B cell (primary cell): ENCODE measurements at regions of chr1 and their contacts with region 1.

Region 1: DNA sequence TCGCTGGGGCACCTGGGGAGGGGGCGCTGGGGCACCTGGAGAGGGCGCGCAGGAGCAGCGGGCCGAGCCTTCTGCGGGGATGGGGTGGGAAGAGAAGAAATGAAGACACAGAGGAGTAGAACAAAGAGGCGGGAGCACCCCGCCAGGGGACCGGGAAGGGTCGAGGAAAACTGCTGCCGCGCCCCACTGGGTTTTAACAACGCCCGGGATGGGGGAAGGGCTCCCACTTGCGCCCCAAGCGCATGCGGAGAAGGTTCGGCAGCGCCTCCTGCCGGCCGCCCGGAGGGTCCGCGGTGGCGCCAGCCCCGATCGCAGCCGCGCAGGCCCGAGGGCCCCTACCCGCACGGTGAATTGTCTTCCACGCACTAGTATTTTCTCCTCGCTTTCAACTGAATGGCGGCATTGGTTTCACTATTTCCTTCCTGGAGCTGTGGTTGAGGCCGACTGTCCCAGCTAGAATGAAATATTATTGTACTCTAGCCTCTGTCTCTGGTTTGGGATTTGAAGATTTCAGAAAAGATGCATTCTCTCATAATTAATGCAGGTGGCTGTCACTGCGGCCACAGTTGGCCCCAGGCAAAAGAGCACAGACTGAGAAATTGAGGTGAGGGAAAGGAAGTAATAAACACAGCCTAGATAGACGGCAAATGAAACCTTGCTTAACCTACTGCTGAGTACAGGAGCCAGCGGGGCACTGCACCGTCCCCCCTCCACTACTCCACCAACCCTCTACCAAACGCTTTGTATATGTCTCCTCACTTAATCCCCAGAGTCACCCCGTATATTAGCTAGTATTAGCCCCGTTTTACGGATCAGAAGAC is 57.3 kb downstream of the MAB21L3 start:
- DNase-seq: peak; percentile 83
- ATAC-seq: peak; percentile 94
- H3K4me3 ChIP-seq: peak overlapping the region; percentile 21 to 62 (median 54)
- H3K4me3 Mint-ChIP-seq: peak overlapping the region; percentile 85
- H3K27ac ChIP-seq: peak overlapping the region in 1 of 2 donors; percentile 4
- H3K27ac Mint-ChIP-seq: peak overlapping the region; percentile 66
- H3K4me1 ChIP-seq: peaks cover 15 to 16% of the 10 kb centered on the region in 2 donors
- H3K4me1 Mint-ChIP-seq: peaks cover 16% of the 10 kb centered on the region
- H3K27me3 ChIP-seq: peaks cover 0 to 19% (median 3%) of the 10 kb centered on the region in 4 experiments
- H3K27me3 Mint-ChIP-seq: peaks cover 24% of the 10 kb centered on the region
- CTCF ChIP-seq: peak; percentile 96

Region 2: DNA sequence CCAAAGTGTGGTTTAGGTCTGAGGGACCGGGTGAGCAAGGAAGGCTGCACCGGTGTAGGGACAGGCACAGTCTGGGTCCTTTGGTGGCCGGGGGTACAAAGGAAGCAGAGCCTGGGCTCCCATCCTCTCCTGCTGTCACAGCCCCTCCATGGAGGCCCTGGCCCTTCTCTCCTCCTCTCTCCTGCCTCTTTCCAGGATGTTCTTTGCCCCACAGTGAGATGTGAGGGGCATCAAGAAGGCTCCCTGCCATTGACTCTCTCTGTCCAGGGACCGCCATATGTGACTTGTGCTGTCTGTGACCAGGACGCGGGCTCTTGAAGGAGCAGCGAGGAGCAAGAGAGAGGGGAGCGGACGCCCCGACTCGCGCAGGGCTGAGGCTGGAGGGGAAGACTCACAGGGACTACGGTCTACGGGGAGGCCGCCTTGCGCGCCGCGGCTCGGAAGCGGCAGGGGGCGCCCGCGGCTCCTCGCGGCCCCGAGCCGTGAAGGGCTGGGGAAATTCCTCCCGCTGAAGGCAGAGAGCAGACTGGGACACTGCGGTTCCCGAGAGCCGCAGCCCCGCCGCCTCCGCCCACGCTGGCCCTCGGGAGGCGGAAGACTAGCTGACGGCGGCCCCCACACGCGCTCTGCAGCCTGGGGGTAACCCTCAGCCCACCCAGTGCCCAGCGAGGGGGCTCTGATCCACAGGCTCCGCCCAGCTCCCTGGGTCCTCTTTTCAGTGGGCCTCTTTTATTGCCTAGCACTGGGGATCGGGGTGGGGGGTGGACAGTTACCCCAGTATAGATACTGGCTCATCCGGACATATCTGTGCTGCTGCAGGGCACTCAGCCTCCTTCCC is 16.5 kb before region 1 on chr1:
- CTCF ChIA-PET with region 1: interaction called, 7 read pairs
- POLR2A ChIA-PET with region 1: no interaction called
- intact Hi-C with region 1: loop called (anchors 2 kb)
- DNase-seq: peak; percentile 86
- ATAC-seq: peak; percentile 98
- H3K4me3 ChIP-seq: peak overlapping the region in 4 of 5 experiments; percentile 17 to 44 (median 41)
- H3K4me3 Mint-ChIP-seq: peak overlapping the region; percentile 65
- H3K27ac ChIP-seq: no peak overlapping the region
- H3K27ac Mint-ChIP-seq: no peak overlapping the region
- H3K4me1 ChIP-seq: peaks cover 7 to 11% of the 10 kb centered on the region in 2 donors
- H3K4me1 Mint-ChIP-seq: peaks cover 8% of the 10 kb centered on the region
- H3K27me3 ChIP-seq: no peaks in the 10 kb centered on the region
- H3K27me3 Mint-ChIP-seq: peaks cover 15% of the 10 kb centered on the region
- CTCF ChIP-seq: peak; percentile 90

Region 3: GRCh38 chr1:116218990-116219321 is 50.5 kb after region 1 on chr1:
- CTCF ChIA-PET with region 1: no interaction called
- POLR2A ChIA-PET with region 1: no interaction called
- intact Hi-C with region 1: loop called (anchors 1 kb)
- DNase-seq: no peak
- ATAC-seq: no peak
- H3K4me3 ChIP-seq: no peak overlapping the region
- H3K4me3 Mint-ChIP-seq: no peak overlapping the region
- H3K27ac ChIP-seq: no peak overlapping the region
- H3K27ac Mint-ChIP-seq: no peak overlapping the region
- H3K4me1 ChIP-seq: no peaks in the 10 kb centered on the region
- H3K4me1 Mint-ChIP-seq: no peaks in the 10 kb centered on the region
- H3K27me3 ChIP-seq: no peaks in the 10 kb centered on the region
- H3K27me3 Mint-ChIP-seq: peaks cover 12% of the 10 kb centered on the region
- CTCF ChIP-seq: no peak

Region 4: DNA sequence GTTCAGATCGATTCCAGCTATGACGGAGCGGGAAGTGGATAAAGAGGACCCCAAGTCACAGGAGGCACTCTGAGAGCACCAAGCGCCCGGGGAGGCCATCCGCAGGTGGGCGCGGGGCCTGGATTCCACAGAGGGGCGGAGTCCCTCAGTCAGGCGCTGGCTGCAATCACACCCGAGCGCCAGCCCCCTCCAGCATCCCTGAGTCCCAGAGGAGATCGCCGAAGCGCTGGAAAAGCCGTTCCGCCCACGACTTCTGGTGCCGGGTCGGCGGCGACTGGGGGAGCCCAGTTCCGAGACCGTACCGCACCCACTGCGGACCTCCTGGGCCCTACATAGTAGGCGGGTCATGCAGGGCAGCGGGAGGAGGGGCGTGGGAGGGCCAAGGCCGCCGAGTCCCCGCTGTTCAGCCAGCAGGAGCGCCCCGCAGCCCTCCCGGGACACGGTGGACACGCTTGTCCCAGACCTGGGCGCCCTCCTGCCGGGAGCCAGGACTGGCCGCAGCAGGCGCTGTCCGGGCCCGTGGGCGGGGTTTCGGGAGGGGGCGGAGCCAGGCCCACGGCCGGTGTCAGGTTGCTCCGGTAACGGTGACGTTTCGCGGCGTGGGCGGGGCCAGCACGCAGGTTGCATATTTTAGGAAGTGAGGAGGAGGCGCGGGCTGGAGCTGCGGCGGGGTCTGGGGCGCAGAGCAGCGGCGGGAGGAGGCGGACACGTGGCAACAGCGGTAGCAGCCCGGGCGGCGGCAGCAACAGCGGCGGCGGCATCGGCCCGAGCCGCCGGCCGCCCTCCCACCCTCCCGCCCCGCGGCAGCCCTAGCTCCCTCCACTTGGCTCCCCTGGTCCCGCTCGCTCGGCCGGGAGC is 204.3 kb after region 1 on chr1 and contains the start of gene ATP1A1:
- CTCF ChIA-PET with region 1: no interaction called
- POLR2A ChIA-PET with region 1: no interaction called
- intact Hi-C with region 1: loop called (anchors 5 kb)
- DNase-seq: peak; percentile 99
- ATAC-seq: peak; percentile 79
- H3K4me3 ChIP-seq: peak within 1 kb of the TSS; percentile 46 to 90 (median 84)
- H3K4me3 Mint-ChIP-seq: peak within 1 kb of the TSS; percentile 96
- H3K27ac ChIP-seq: peak within 1 kb of the TSS; percentile 81 to 91
- H3K27ac Mint-ChIP-seq: peak within 1 kb of the TSS; percentile 96
- H3K4me1 ChIP-seq: peaks cover 39 to 44% of the 10 kb centered on the region in 2 donors
- H3K4me1 Mint-ChIP-seq: peaks cover 37% of the 10 kb centered on the region
- H3K27me3 ChIP-seq: peaks cover 0 to 7% (median 3%) of the 10 kb centered on the region in 4 experiments
- H3K27me3 Mint-ChIP-seq: peaks cover 20% of the 10 kb centered on the region
- CTCF ChIP-seq: no peak
- total RNA-seq, gene ATP1A1: 101 and 107 TPM in 2 replicates

Region 5: GRCh38 chr1:116418091-116418830 is 249.8 kb after region 1 on chr1:
- CTCF ChIA-PET with region 1: no interaction called
- POLR2A ChIA-PET with region 1: no interaction called
- intact Hi-C with region 1: loop called (anchors 1 kb)
- DNase-seq: peak; percentile 92
- ATAC-seq: peak; percentile 95
- H3K4me3 ChIP-seq: peak overlapping the region; percentile 66 to 86 (median 84)
- H3K4me3 Mint-ChIP-seq: peak overlapping the region; percentile 86
- H3K27ac ChIP-seq: peak overlapping the region; percentile 62 to 80
- H3K27ac Mint-ChIP-seq: peak overlapping the region; percentile 91
- H3K4me1 ChIP-seq: peaks cover 16 to 20% of the 10 kb centered on the region in 2 donors
- H3K4me1 Mint-ChIP-seq: peaks cover 26% of the 10 kb centered on the region
- H3K27me3 ChIP-seq: no peaks in the 10 kb centered on the region
- H3K27me3 Mint-ChIP-seq: peaks cover 4% of the 10 kb centered on the region
- CTCF ChIP-seq: no peak